Heart left ventricle (tissue), 16 donors: ENCODE measurements at regions of chr17 and their contacts with region 1.

Region 1: GRCh38 chr17:29753845-29754439 is 131.2 kb upstream of the CORO6 start:
- DNase-seq: no peak
- ATAC-seq: no peak
- H3K4me3 ChIP-seq: no peak overlapping the region
- H3K27ac ChIP-seq: peak overlapping the region in 1 of 12 donors; percentile 17
- H3K4me1 ChIP-seq: peaks cover 0 to 35% (median 11%) of the 10 kb centered on the region in 12 donors
- H3K27me3 ChIP-seq: no peaks in the 10 kb centered on the region
- CTCF ChIP-seq: no peak
- POLR2A ChIP-seq: no peak

Region 2: GRCh38 chr17:29699283-29699682 is 54.7 kb before region 1 on chr17:
- intact Hi-C with region 1: loop called in 1 of 10 experiments (anchors 10 kb)
- DNase-seq: no peak
- ATAC-seq: peak in 2 of 4 donors; percentile 40 to 56
- H3K4me3 ChIP-seq: no peak overlapping the region
- H3K27ac ChIP-seq: peak overlapping the region in 11 of 12 donors; percentile 43 to 78 (median 66)
- H3K4me1 ChIP-seq: peaks cover 0 to 48% (median 28%) of the 10 kb centered on the region in 12 donors
- H3K27me3 ChIP-seq: no peaks in the 10 kb centered on the region
- CTCF ChIP-seq: no peak
- POLR2A ChIP-seq: no peak